Cardiac septum (tissue), 1 donor: ENCODE measurements at regions of chr11 and their contacts with region 1.

Region 1: DNA sequence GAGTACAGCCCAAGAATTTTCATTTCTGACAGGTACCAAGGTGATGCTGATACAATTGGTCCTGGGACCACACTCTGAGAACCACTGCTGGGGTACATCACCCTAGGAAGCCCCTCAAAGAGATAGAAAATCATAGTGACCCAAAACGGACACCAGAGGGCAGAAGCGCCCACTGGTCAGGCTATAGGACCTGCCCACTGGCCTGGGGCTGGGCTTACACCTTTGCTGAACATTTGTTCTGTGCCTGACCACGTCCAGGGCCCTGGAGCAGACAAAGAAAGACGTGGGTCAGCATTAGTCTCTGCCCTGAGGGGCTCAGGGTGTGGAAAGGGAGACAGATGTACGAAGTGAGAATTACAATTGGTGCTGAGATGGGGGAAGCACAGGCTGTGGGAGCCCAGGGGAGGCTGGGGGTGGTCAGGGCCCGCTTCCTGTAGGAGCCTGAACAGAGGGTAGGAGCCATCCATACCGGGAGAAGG is 14.4 kb upstream of the SERPINH1 start:
- DNase-seq: no peak

Region 2: GRCh38 chr11:75577207-75577606 is 29.6 kb after region 1 on chr11:
- intact Hi-C with region 1: loop called (anchors 2 kb)
- DNase-seq: no peak

Region 3: GRCh38 chr11:75706260-75706729 is 158.7 kb after region 1 on chr11:
- intact Hi-C with region 1: loop called (anchors 5 kb)
- DNase-seq: peak; percentile 91